Transverse colon (tissue), 4 donors: ENCODE measurements at regions of chr2 and their contacts with region 1.

Region 1: DNA sequence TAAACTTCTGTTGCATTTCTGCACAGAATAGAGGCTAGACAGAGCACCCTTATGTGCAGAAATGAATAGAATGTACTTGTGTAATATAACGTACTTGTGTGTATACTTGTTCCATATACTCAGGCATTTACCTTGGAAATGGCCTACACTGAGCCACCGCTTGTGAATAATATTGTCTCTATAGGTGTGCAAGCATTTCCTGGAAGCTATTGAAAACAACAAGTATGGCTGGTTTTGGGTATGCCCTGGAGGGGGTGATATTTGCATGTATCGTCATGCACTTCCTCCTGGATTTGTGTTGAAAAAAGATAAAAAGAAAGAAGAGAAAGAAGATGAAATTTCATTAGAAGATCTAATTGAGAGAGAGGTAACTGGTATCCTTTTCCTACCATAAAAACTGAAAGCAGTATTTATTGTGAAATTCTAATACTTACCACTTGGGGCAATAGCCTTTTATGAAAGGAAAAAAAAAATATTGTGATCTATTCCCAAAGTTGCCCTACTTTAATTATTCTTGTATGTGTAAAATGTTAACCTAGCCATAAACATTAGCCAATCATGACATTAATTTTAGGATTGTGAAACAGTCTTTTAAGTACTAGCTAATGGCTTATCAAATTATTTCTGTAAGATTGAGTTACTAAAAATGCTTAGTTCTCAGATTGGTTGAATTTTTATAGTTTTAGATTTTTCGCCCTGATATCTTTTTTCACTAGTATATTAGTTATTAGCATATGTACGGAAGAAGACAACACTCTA is 18.0 kb downstream of the ZC3H15 start:
- DNase-seq: no peak
- H3K4me3 ChIP-seq: no peak overlapping the region
- H3K27ac ChIP-seq: no peak overlapping the region
- H3K4me1 ChIP-seq: no peaks in the 10 kb centered on the region
- H3K27me3 ChIP-seq: no peaks in the 10 kb centered on the region
- CTCF ChIP-seq: peak; percentile 59 to 66 (median 61)
- EP300 ChIP-seq: no peak
- POLR2A ChIP-seq: no peak

Region 2: GRCh38 chr2:186595219-186595618 is 91.2 kb after region 1 on chr2:
- in situ Hi-C with region 1: no loop called
- intact Hi-C with region 1: loop called (anchors 5 kb)
- DNase-seq: no peak
- H3K4me3 ChIP-seq: no peak overlapping the region
- H3K27ac ChIP-seq: peak overlapping the region in 1 of 4 donors; percentile 5
- H3K4me1 ChIP-seq: peaks cover 0 to 28% (median 16%) of the 10 kb centered on the region in 4 donors
- H3K27me3 ChIP-seq: no peaks in the 10 kb centered on the region
- CTCF ChIP-seq: no peak
- EP300 ChIP-seq: no peak
- POLR2A ChIP-seq: no peak

Region 3: DNA sequence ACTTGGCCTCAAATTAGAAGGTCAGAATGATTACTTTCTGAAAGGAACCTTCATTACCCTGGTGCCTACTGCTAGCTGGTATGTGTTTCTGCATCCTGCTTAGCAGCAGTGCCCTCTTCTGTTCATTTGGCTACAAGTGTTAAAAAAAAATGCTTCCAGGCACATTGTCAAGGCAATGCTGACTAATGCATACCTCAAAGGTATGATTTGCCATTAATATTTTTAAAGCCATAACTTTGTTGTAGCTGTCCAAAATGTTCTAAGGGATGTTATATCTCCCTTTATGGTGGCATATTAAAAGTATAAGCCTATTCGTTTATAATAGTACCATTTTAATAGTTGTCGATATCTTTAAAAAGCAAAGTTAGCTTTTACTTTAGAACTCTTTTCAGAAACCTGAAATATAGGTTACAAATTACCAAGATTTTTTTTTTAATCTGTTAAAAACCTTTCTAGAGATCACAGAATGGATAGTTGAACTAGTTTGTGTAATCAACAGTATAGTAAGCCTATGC is 137.8 kb after region 1 on chr2:
- in situ Hi-C with region 1: loop called (anchors 5 to 10 kb)
- intact Hi-C with region 1: no loop called
- DNase-seq: peak; percentile 15
- H3K4me3 ChIP-seq: no peak overlapping the region
- H3K27ac ChIP-seq: no peak overlapping the region
- H3K4me1 ChIP-seq: no peaks in the 10 kb centered on the region
- H3K27me3 ChIP-seq: no peaks in the 10 kb centered on the region
- CTCF ChIP-seq: peak; percentile 55 to 62 (median 58)
- EP300 ChIP-seq: no peak
- POLR2A ChIP-seq: no peak

Region 4: DNA sequence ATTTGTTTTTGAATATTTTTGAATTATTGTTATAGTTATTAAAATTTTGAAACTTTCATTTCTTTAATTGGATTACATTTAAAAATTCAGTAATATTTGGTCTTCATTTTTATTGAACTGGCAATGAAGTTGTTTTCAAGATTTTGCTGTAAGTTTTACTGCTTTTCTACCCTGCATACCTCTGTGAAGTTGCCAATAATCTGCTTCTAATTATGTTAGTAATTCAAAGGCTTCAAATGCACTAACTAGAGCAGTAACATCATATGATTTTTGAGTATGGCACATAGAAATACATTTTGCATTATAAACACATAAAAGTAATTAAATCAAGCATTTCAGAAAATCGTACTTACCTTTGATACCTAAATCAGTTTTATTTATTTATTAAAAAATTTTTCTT is 149.5 kb after region 1 on chr2:
- in situ Hi-C with region 1: loop called in 2 of 4 experiments (anchors 10 kb)
- intact Hi-C with region 1: loop called (anchors 2 kb)
- DNase-seq: no peak
- H3K4me3 ChIP-seq: no peak overlapping the region
- H3K27ac ChIP-seq: no peak overlapping the region
- H3K4me1 ChIP-seq: no peaks in the 10 kb centered on the region
- H3K27me3 ChIP-seq: no peaks in the 10 kb centered on the region
- CTCF ChIP-seq: no peak
- EP300 ChIP-seq: no peak
- POLR2A ChIP-seq: no peak

Region 5: GRCh38 chr2:186675380-186675779 is 171.4 kb after region 1 on chr2:
- in situ Hi-C with region 1: loop called in 1 of 4 experiments (anchors 10 kb)
- intact Hi-C with region 1: no loop called
- DNase-seq: no peak
- H3K4me3 ChIP-seq: no peak overlapping the region
- H3K27ac ChIP-seq: no peak overlapping the region
- H3K4me1 ChIP-seq: no peaks in the 10 kb centered on the region
- H3K27me3 ChIP-seq: no peaks in the 10 kb centered on the region
- CTCF ChIP-seq: no peak
- EP300 ChIP-seq: no peak
- POLR2A ChIP-seq: no peak